IMR-90 (cell line): ENCODE measurements at regions of chr3 and their contacts with region 1.

Region 1: GRCh38 chr3:192816351-192816750 is 89.0 kb upstream of the FGF12 start:
- DNase-seq: peak; percentile 73
- ATAC-seq: peak; percentile 7; the same call in 1 of the 2 replicates
- H3K4me3 ChIP-seq: no peak overlapping the region
- H3K27ac ChIP-seq: no peak overlapping the region
- H3K4me1 ChIP-seq: peaks cover 18% of the 10 kb centered on the region
- H3K27me3 ChIP-seq: no peaks in the 10 kb centered on the region
- CTCF ChIP-seq: peak; percentile 86
- POLR2A ChIP-seq: 0 out of 2 replicates have a peak, but pooled peaks have one; percentile 25
- RAD21 ChIP-seq: peak; percentile 87

Region 2: GRCh38 chr3:192494174-192494573 is 322.2 kb before region 1 on chr3:
- CTCF ChIA-PET with region 1: no interaction called
- POLR2A ChIA-PET with region 1: no interaction called
- dilution Hi-C with region 1: no loop called
- in situ Hi-C with region 1: no loop called
- intact Hi-C with region 1: no loop called
- DNase-seq: no peak
- ATAC-seq: no peak
- H3K4me3 ChIP-seq: no peak overlapping the region
- H3K27ac ChIP-seq: no peak overlapping the region
- H3K4me1 ChIP-seq: no peaks in the 10 kb centered on the region
- H3K27me3 ChIP-seq: no peaks in the 10 kb centered on the region
- CTCF ChIP-seq: no peak
- POLR2A ChIP-seq: no peak
- RAD21 ChIP-seq: no peak

Region 3: DNA sequence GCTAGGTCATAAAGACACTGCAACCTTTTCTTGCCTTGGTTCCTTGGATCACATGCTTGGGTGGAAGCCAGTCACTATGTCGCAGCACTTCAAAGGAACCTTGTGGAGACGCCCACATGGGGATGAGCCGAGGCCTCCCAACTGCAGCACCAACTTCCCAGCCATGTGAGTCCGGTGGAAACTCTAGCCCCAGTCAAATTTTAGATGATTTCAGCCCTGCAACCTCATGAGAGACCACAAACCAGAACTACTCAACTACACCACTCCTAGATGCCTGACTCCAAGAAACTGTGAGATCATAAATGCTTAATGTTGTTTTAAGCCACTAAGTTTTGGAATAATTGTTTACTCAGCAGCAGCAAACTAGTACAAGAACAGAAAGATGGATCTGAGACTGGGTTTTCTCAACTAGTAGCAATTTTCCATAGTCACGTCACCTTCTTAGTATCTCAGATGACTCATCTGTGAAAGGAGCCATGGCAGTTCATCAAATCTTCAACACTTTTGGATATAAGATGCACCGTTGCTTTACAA is 14.8 kb after region 1 on chr3:
- CTCF ChIA-PET with region 1: no interaction called
- POLR2A ChIA-PET with region 1: interaction called, 19 read pairs
- dilution Hi-C with region 1: no loop called
- in situ Hi-C with region 1: no loop called
- intact Hi-C with region 1: no loop called
- DNase-seq: peak; percentile 98
- ATAC-seq: peak; percentile 80
- H3K4me3 ChIP-seq: no peak overlapping the region
- H3K27ac ChIP-seq: peak overlapping the region; percentile 46
- H3K4me1 ChIP-seq: peaks cover 29% of the 10 kb centered on the region
- H3K27me3 ChIP-seq: no peaks in the 10 kb centered on the region
- CTCF ChIP-seq: no peak
- POLR2A ChIP-seq: no peak
- RAD21 ChIP-seq: 0 out of 2 replicates have a peak, but pooled peaks have one; percentile 10

Region 4: DNA sequence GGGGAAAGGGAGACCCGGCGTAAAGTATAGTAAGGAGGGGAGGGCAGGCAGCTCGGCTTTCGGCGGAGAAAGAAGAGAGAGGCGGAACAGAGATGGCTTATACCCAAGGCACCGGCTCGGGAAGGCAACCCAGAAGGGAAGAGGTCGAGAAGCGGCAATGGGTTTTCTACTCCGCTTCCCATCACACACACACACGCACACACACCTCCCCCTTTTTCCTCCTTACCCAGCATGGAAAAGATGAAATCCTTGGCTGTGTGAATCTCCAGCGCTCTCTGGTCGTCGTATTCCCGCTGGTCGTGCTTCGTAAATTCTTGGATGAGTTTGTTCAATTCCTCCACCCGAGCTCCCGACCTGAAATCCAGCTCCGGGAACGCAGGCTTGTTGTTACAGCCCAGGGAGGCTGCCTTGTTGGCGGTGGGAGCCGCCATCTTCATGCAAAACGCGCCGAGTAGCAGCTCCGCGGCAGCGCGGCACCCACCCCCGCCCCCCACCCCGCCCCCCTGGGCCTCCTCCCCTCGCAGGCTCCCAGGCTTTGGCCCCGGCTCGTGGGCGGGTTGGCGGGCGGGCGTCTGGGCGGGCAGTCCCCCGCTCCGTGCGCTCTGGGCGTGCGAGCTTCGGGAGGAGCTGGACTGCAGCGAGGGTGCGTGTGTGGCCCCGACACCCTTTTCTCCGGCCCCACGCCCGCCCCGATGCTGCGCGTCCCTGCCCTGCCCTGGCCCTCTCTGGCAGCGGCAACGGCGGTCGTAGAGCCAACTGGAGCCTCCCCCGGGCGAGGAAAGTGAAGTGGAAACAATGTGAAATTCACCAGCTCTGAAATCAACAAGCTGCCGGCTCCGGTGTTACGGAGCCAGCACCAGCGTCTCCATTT is 101.3 kb after region 1 on chr3 and contains the start of gene MB21D2:
- CTCF ChIA-PET with region 1: interaction called, 22 read pairs
- POLR2A ChIA-PET with region 1: interaction called, 6 read pairs
- dilution Hi-C with region 1: no loop called
- in situ Hi-C with region 1: loop called (anchors 5 kb)
- intact Hi-C with region 1: loop called (anchors 1 kb)
- DNase-seq: peak; percentile 80
- ATAC-seq: peak; percentile 90
- H3K4me3 ChIP-seq: peak within 1 kb of the TSS; percentile 79
- H3K27ac ChIP-seq: peak within 1 kb of the TSS; percentile 91
- H3K4me1 ChIP-seq: peaks cover 5% of the 10 kb centered on the region
- H3K27me3 ChIP-seq: no peaks in the 10 kb centered on the region
- CTCF ChIP-seq: no peak
- POLR2A ChIP-seq: peak; percentile 90
- RAD21 ChIP-seq: no peak; the same call in none of the 2 replicates
- total RNA-seq, gene MB21D2: 44.8 and 46.4 TPM in 2 replicates

Region 5: GRCh38 chr3:193240850-193241706 is 424.7 kb after region 1 on chr3 and contains the start of gene PLAAT1:
- CTCF ChIA-PET with region 1: no interaction called
- POLR2A ChIA-PET with region 1: no interaction called
- dilution Hi-C with region 1: no loop called
- in situ Hi-C with region 1: no loop called
- intact Hi-C with region 1: loop called (anchors 5 kb)
- DNase-seq: peak; percentile 19
- ATAC-seq: peak; percentile 78
- H3K4me3 ChIP-seq: peak within 1 kb of the TSS; percentile 48
- H3K27ac ChIP-seq: no peak within 1 kb of the TSS
- H3K4me1 ChIP-seq: no peaks in the 10 kb centered on the region
- H3K27me3 ChIP-seq: no peaks in the 10 kb centered on the region
- CTCF ChIP-seq: no peak
- POLR2A ChIP-seq: no peak
- RAD21 ChIP-seq: no peak
- total RNA-seq, gene PLAAT1: 0.54 and 0.56 TPM in 2 replicates

Region 6: DNA sequence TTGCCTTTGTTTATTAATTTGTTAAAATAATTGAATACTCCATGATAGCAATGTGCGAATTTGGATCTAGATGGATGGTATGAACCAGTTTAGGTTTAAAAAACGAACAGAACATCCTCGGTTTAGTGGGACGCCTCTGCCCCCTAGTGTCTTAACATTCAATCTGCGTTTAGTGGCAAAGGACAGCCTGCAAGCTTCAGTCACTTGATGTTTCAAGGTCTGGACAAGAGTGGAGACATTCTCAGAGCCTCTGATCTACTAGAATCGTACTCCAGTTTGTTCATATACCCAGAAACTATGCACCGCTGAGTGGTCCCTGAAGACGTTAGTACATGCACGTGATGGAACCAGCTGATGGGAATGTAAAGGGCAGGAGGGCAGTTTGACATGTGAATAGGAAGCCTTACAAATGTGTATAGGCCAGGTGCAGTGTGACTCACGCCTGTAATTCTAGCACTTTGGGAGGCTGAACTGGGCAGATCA is 756.1 kb after region 1 on chr3:
- CTCF ChIA-PET with region 1: interaction called, 6 read pairs
- POLR2A ChIA-PET with region 1: no interaction called
- dilution Hi-C with region 1: no loop called
- in situ Hi-C with region 1: loop called (anchors 5 kb)
- intact Hi-C with region 1: loop called (anchors 1 kb)
- DNase-seq: peak; percentile 64
- ATAC-seq: peak; percentile 96
- H3K4me3 ChIP-seq: no peak overlapping the region
- H3K27ac ChIP-seq: no peak overlapping the region
- H3K4me1 ChIP-seq: no peaks in the 10 kb centered on the region
- H3K27me3 ChIP-seq: 0 out of 2 replicates have a peak, but pooled peaks cover 2% of the 10 kb centered on the region
- CTCF ChIP-seq: peak; percentile 83
- POLR2A ChIP-seq: peak; percentile 29; the same call in 1 of the 2 replicates
- RAD21 ChIP-seq: peak; percentile 84